Panc1 (cell line): ENCODE measurements at regions of chr2 and their contacts with region 1.

Region 1: DNA sequence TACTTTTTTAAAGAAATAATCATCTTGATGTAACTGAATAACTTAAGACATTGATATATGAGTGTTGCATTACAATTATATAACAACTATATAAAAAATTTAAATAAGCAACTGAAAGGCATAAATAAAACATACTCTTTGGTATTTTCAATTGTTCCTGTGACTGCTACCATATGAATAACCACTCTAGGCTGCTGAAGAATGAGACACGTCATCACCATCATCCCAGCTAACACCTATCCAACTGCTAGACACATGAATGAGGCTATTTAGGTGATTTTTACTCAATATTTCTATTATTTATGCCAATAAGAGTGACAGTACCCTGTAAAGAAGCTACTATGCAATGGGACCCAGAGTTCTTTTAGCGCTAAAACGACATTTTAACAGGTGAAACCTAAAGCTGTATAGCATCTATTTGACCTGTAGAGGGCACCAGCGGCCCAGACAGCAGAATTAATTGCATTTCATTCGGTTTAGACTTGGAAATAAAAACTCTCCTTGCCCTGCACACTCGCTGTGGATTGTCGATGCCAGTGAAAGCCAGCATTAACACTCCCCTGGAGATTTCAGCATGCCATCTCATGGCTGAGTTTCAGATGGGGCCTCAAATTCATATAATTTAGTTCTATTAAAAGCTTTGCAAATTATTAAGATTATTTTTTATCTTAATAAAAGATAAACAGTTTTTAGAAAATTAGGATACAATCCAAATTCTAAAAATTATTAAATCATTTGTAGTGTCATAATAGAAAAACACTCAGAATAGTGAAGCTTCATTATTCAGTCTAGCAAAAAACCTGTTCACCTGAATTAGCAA is 89.4 kb upstream of the MAP2 start:
- DNase-seq: peak; percentile 43
- ATAC-seq: peak; percentile 95
- H3K4me3 ChIP-seq: no peak overlapping the region
- H3K27ac ChIP-seq: peak overlapping the region; percentile 18; the same call in 1 of the 2 replicates
- H3K4me1 ChIP-seq: 0 out of 2 replicates have a peak, but pooled peaks cover 6% of the 10 kb centered on the region
- H3K27me3 ChIP-seq: no peaks in the 10 kb centered on the region
- CTCF ChIP-seq: peak; percentile 94

Region 2: DNA sequence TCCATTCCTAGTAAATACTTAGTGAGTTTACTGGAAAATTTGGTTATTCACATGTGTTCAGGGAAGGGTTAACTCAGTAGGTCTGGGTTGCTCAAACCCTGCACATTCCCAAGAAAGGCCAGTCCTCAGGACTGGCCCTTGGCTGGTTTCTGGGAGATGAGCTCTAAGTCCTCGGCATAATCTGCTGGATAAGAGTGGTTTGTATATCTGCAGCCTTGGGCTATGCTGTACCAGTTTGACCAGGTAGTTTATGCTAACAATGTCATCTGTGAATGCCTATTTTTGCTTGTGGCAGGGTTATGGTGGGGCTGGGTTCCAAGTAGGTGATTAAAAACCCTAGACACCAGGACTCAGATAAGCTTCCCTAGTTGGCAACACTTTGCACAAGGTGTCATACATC is 935.2 kb before region 1 on chr2:
- CTCF ChIA-PET with region 1: interaction called, 3 read pairs
- POLR2A ChIA-PET with region 1: no interaction called
- in situ Hi-C with region 1: loop called (anchors 5 kb)
- intact Hi-C with region 1: no loop called
- DNase-seq: no peak
- ATAC-seq: no peak
- H3K4me3 ChIP-seq: no peak overlapping the region
- H3K27ac ChIP-seq: no peak overlapping the region
- H3K4me1 ChIP-seq: no peaks in the 10 kb centered on the region
- H3K27me3 ChIP-seq: peaks cover 15% of the 10 kb centered on the region
- CTCF ChIP-seq: no peak

Region 3: DNA sequence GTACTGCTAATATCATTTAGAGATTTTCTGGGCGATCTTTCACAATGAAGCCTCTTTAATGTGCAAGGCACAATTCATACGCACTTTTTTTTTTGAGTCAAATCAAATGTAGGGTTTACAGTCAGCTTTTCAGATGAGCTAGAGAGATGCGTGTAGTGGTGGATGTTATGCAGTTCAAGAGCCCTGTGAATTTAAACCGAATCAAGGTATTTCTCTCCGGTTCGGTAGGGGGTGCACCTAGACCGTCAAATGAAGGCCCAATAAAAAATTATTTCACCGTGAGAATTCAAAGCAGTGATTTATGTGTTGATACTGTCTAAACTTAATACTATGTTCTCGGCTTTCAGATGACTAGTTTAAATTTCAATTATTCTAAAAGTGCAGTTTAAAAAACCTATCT is 926.7 kb before region 1 on chr2:
- CTCF ChIA-PET with region 1: interaction called, 3 read pairs
- POLR2A ChIA-PET with region 1: no interaction called
- in situ Hi-C with region 1: no loop called
- intact Hi-C with region 1: loop called (anchors 2 kb)
- DNase-seq: no peak
- ATAC-seq: peak; percentile 88
- H3K4me3 ChIP-seq: no peak overlapping the region
- H3K27ac ChIP-seq: no peak overlapping the region
- H3K4me1 ChIP-seq: no peaks in the 10 kb centered on the region
- H3K27me3 ChIP-seq: peaks cover 49% of the 10 kb centered on the region
- CTCF ChIP-seq: peak; percentile 68

Region 4: DNA sequence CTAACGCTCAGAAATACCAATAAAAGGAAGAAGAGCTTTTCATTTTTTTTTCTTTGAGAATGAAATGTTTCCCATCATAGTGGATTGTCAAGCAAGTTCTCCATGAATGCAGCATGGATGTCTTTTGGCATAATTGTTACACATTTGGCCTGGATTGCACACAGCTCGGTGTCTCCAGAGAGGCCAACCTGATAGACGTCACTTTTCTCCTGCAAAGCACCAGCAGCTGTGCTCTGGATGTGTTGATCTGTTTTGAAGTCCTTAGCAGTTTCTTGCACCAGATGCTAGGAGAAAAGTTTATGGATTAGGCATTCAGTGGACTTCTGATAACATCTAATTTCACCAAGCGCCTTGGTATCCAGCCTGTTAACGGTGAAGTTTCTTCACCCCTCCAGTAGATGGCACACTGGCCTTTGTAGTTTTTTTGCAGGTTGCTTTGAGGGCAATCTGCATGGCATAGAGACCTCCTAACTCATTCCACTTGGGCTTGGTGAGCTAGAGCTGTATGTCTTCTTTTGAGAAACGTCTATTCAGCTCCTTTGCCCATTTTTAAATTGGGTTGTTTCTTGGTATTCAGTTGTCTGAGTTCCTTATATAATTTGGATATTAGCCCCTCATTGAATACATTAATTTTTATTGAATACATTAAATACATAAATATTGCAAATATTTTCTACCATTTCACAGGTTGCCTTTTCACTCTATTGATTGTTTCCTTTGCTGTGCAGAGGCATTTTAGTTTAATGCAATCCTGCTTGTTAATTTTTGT is 868.1 kb before region 1 on chr2:
- CTCF ChIA-PET with region 1: no interaction called
- POLR2A ChIA-PET with region 1: no interaction called
- in situ Hi-C with region 1: no loop called
- intact Hi-C with region 1: loop called (anchors 2 kb)
- DNase-seq: peak; percentile 22
- ATAC-seq: peak; percentile 84
- H3K4me3 ChIP-seq: no peak overlapping the region
- H3K27ac ChIP-seq: no peak overlapping the region
- H3K4me1 ChIP-seq: no peaks in the 10 kb centered on the region
- H3K27me3 ChIP-seq: no peaks in the 10 kb centered on the region; the same call in 1 of the 2 replicates
- CTCF ChIP-seq: peak; percentile 85

Region 5: GRCh38 chr2:209008636-209009287 is 325.6 kb before region 1 on chr2:
- CTCF ChIA-PET with region 1: no interaction called
- POLR2A ChIA-PET with region 1: no interaction called
- in situ Hi-C with region 1: no loop called
- intact Hi-C with region 1: no loop called
- DNase-seq: no peak
- ATAC-seq: no peak
- H3K4me3 ChIP-seq: no peak overlapping the region
- H3K27ac ChIP-seq: no peak overlapping the region
- H3K4me1 ChIP-seq: no peaks in the 10 kb centered on the region
- H3K27me3 ChIP-seq: no peaks in the 10 kb centered on the region
- CTCF ChIP-seq: no peak

Region 6: DNA sequence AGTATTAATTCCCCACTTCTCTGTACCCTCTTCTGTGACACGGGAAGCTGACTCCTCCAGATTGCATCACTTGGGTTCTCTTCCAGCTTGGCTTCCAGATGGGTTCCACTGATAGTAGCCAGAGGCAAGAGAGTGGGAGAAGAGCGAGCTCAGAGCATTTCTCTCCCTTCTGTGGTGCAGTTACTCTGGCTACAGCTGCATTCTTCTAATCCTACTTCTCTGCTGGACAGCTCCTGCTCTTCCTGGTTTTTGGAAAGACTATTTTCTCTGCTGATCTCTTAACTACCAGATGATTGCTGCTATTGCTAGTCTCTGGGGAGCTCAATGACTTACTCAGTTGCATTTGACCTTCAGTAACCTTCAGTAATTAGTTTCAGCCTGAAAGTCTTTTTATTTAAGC is 98.0 kb before region 1 on chr2:
- CTCF ChIA-PET with region 1: no interaction called
- POLR2A ChIA-PET with region 1: no interaction called
- in situ Hi-C with region 1: no loop called
- intact Hi-C with region 1: no loop called
- DNase-seq: no peak
- ATAC-seq: no peak
- H3K4me3 ChIP-seq: no peak overlapping the region
- H3K27ac ChIP-seq: no peak overlapping the region
- H3K4me1 ChIP-seq: no peaks in the 10 kb centered on the region
- H3K27me3 ChIP-seq: no peaks in the 10 kb centered on the region
- CTCF ChIP-seq: no peak

Region 7: GRCh38 chr2:209505410-209505809 is 171.0 kb after region 1 on chr2:
- CTCF ChIA-PET with region 1: no interaction called
- POLR2A ChIA-PET with region 1: no interaction called
- in situ Hi-C with region 1: no loop called
- intact Hi-C with region 1: no loop called
- DNase-seq: no peak
- ATAC-seq: no peak
- H3K4me3 ChIP-seq: no peak overlapping the region
- H3K27ac ChIP-seq: no peak overlapping the region
- H3K4me1 ChIP-seq: peaks cover 7% of the 10 kb centered on the region; the same call in 1 of the 2 replicates
- H3K27me3 ChIP-seq: no peaks in the 10 kb centered on the region
- CTCF ChIP-seq: no peak

Region 8: DNA sequence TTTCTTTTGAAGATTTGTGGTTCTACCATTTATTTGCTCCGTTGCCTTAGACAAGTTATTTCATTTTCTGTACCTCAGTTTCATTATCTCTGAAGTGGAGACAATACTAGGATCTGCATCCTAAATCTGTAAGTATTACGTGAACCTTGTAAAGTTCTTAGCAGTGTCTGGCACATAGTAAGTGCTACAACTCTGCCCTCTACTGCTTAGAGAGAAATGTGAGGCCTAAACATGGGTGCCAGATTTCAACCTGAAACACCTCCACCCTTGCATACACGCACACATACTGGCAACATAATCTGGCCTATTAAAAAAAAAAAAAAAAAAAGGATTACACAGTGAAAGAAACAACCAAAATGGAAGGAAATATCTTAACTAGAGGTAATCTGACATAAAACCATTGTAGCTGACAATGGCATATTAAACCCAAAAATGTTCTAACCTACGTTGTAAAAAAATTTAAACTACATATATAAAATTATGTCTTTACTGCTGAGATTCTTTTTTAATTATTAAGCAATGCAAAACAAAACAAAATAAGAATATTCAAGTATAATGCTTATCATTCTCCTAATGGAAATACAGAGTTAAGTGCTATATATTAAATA is 222.1 kb after region 1 on chr2:
- CTCF ChIA-PET with region 1: no interaction called
- POLR2A ChIA-PET with region 1: no interaction called
- in situ Hi-C with region 1: no loop called
- intact Hi-C with region 1: loop called (anchors 5 kb)
- DNase-seq: peak; percentile 18
- ATAC-seq: peak; percentile 89
- H3K4me3 ChIP-seq: no peak overlapping the region
- H3K27ac ChIP-seq: no peak overlapping the region
- H3K4me1 ChIP-seq: no peaks in the 10 kb centered on the region
- H3K27me3 ChIP-seq: no peaks in the 10 kb centered on the region
- CTCF ChIP-seq: peak; percentile 67

Region 9: GRCh38 chr2:209577376-209578357 is 243.3 kb after region 1 on chr2:
- CTCF ChIA-PET with region 1: no interaction called
- POLR2A ChIA-PET with region 1: no interaction called
- in situ Hi-C with region 1: no loop called
- intact Hi-C with region 1: loop called (anchors 1 kb)
- DNase-seq: no peak
- ATAC-seq: no peak
- H3K4me3 ChIP-seq: no peak overlapping the region
- H3K27ac ChIP-seq: peak overlapping the region; percentile 51; the same call in 1 of the 2 replicates
- H3K4me1 ChIP-seq: peaks cover 6% of the 10 kb centered on the region; the same call in 1 of the 2 replicates
- H3K27me3 ChIP-seq: no peaks in the 10 kb centered on the region
- CTCF ChIP-seq: peak; percentile 55; the same call in 1 of the 2 replicates

Region 10: DNA sequence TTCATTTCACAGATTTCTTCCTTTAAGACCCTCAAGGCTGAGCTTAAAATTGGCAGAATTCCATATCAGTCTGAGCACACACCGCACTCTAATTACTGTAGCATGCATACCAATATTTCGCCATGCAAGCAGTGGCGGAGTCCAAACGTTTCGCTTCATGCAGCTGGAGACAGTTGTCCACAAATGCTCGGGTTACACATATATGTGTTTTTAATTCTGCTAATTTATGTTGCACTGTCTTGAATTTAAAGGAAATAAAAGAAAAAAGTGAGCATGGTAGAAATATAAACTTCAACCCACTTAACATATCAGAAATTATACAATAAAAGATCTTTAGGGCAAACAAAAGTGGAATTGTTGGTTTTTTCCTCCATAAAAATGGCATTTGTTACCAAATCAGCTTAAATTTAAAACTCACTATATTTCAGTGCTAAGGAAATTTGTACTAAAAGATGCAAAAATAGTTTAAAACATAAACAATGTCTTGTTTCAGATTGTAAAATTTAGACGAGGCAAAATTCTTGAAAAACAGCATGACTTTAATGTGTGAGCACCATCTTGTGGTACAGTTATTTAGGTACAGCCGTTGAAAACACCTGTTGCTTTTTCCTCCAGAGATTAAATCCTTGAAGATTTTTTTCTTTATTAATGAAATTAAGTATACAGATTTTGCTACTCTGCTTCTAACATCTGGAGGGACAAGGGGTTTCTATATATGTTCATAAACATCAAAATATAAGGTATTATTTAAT is 860.9 kb after region 1 on chr2:
- CTCF ChIA-PET with region 1: no interaction called
- POLR2A ChIA-PET with region 1: no interaction called
- in situ Hi-C with region 1: no loop called
- intact Hi-C with region 1: loop called (anchors 10 kb)
- DNase-seq: peak; percentile 30
- ATAC-seq: peak; percentile 73; the same call in 1 of the 2 replicates
- H3K4me3 ChIP-seq: peak overlapping the region in 1 of 2 experiments; percentile 19; a peak in 1 of 4 replicates
- H3K27ac ChIP-seq: no peak overlapping the region
- H3K4me1 ChIP-seq: no peaks in the 10 kb centered on the region
- H3K27me3 ChIP-seq: no peaks in the 10 kb centered on the region; the same call in 1 of the 2 replicates
- CTCF ChIP-seq: peak; percentile 69; the same call in 1 of the 2 replicates